ENCODE measurements at regions of chr19 and their contacts with region 1.

Region 1: GRCh38 chr19:44002566-44003460 is at the start of gene ZNF230:
- DNase-seq: peak; percentile 90
- ATAC-seq: peak; percentile 99
- H3K4me3 Mint-ChIP-seq: peak within 1 kb of the TSS; percentile 85
- H3K27ac Mint-ChIP-seq: peak within 1 kb of the TSS; percentile 98
- H3K4me1 Mint-ChIP-seq: peaks cover 16% of the 10 kb centered on the region
- H3K27me3 Mint-ChIP-seq: no peaks in the 10 kb centered on the region
- total RNA-seq, gene ZNF230: 3.0 to 3.8 TPM

Region 2: GRCh38 chr19:43668406-43669158 is 334.2 kb before region 1 on chr19:
- CTCF ChIA-PET with region 1: no interaction called
- POLR2A ChIA-PET with region 1: no interaction called
- intact Hi-C with region 1: no loop called
- DNase-seq: peak; percentile 99
- ATAC-seq: peak; percentile 86
- H3K4me3 Mint-ChIP-seq: peak overlapping the region; percentile 85
- H3K27ac Mint-ChIP-seq: peak overlapping the region; percentile 90
- H3K4me1 Mint-ChIP-seq: peaks cover 42% of the 10 kb centered on the region
- H3K27me3 Mint-ChIP-seq: no peaks in the 10 kb centered on the region

Region 3: GRCh38 chr19:43901395-43902390 is 101.1 kb before region 1 on chr19:
- CTCF ChIA-PET with region 1: no interaction called
- POLR2A ChIA-PET with region 1: no interaction called
- intact Hi-C with region 1: loop called in 1 of 2 experiments (anchors 1 kb)
- DNase-seq: peak; percentile 82
- ATAC-seq: peak; percentile 96
- H3K4me3 Mint-ChIP-seq: peak overlapping the region; percentile 82
- H3K27ac Mint-ChIP-seq: peak overlapping the region; percentile 78
- H3K4me1 Mint-ChIP-seq: peaks cover 19% of the 10 kb centered on the region
- H3K27me3 Mint-ChIP-seq: no peaks in the 10 kb centered on the region

Region 4: DNA sequence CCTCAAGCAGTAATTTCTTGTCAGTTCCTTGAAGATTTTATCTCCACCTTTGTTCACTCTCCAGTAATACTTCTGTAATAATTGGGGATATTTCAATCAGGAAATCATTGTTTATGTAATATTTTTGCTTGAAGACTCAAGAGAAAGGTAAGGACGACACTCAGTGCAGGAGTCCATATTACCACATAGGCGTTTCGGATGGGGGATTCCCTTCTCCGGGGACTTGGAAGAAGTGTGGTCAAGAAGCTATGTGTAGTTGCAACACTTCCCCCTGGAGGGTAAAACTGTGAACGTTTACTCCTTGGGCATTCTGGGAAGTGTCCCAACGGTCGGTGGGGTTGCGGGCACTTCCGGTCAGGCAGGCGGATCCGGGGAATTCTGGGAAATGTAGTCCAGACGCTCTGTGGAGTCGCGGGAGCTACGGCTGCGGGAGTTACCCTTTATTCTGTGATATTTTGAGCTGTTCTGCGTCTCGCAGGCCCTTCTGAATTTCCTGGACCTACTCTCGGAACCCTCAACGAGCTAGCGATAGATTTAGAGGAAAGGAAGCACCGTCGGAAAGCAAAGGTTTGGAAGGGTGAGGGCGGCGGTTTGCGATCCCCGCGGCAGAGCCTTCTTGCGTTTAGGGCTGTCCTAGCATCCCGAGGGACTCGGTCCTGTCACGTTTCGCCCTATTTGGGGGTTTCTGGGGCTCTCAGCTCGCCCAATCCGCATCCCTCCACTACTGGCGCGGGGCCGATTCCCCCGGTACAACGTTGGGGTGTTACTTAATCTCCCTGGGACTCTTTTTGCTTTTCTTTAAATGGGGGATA is 51.8 kb before region 1 on chr19 and contains the start of gene ZNF221:
- CTCF ChIA-PET with region 1: no interaction called
- POLR2A ChIA-PET with region 1: no interaction called
- intact Hi-C with region 1: loop called in 1 of 2 experiments (anchors 1 kb)
- DNase-seq: peak; percentile 84
- ATAC-seq: peak; percentile 95
- H3K4me3 Mint-ChIP-seq: peak within 1 kb of the TSS; percentile 83
- H3K27ac Mint-ChIP-seq: peak within 1 kb of the TSS; percentile 85
- H3K4me1 Mint-ChIP-seq: peaks cover 6% of the 10 kb centered on the region
- H3K27me3 Mint-ChIP-seq: peaks cover 17% of the 10 kb centered on the region
- total RNA-seq, gene ZNF221: 1.8 to 1.9 TPM

Region 5: GRCh38 chr19:44071824-44072542 is 69.2 kb after region 1 on chr19 and contains the start of gene ZNF284:
- CTCF ChIA-PET with region 1: no interaction called
- POLR2A ChIA-PET with region 1: no interaction called
- intact Hi-C with region 1: loop called in 1 of 2 experiments (anchors 1 kb)
- DNase-seq: peak; percentile 88
- ATAC-seq: peak; percentile 99
- H3K4me3 Mint-ChIP-seq: peak within 1 kb of the TSS; percentile 83
- H3K27ac Mint-ChIP-seq: peak within 1 kb of the TSS; percentile 78
- H3K4me1 Mint-ChIP-seq: peaks cover 23% of the 10 kb centered on the region
- H3K27me3 Mint-ChIP-seq: peaks cover 2% of the 10 kb centered on the region
- total RNA-seq, gene ZNF284: 2.1 TPM

Region 6: GRCh38 chr19:44164673-44165512 is 162.1 kb after region 1 on chr19 and contains the start of gene ZNF226:
- CTCF ChIA-PET with region 1: no interaction called
- POLR2A ChIA-PET with region 1: no interaction called
- intact Hi-C with region 1: loop called in 1 of 2 experiments (anchors 1 kb)
- DNase-seq: peak; percentile 87
- ATAC-seq: peak; percentile 89
- H3K4me3 Mint-ChIP-seq: peak within 1 kb of the TSS; percentile 87
- H3K27ac Mint-ChIP-seq: peak within 1 kb of the TSS; percentile 96
- H3K4me1 Mint-ChIP-seq: peaks cover 30% of the 10 kb centered on the region
- H3K27me3 Mint-ChIP-seq: no peaks in the 10 kb centered on the region
- total RNA-seq, gene ZNF226: 11.3 to 15.2 TPM

Region 7: GRCh38 chr19:44212250-44212865 is 209.5 kb after region 1 on chr19 and contains the start of gene ZNF227:
- CTCF ChIA-PET with region 1: no interaction called
- POLR2A ChIA-PET with region 1: no interaction called
- intact Hi-C with region 1: loop called (anchors 1 kb)
- DNase-seq: peak; percentile 90
- ATAC-seq: peak; percentile 98
- H3K4me3 Mint-ChIP-seq: peak within 1 kb of the TSS; percentile 90
- H3K27ac Mint-ChIP-seq: peak within 1 kb of the TSS; percentile 92
- H3K4me1 Mint-ChIP-seq: peaks cover 22% of the 10 kb centered on the region
- H3K27me3 Mint-ChIP-seq: no peaks in the 10 kb centered on the region
- total RNA-seq, gene ZNF227: 19.4 to 20.6 TPM